ENCODE measurements at regions of chr3 and their contacts with region 1.

Region 1: GRCh38 chr3:52891615-52892081 is 5.7 kb downstream of the STIMATE start:
- DNase-seq: no peak
- H3K4me3 Mint-ChIP-seq: no peak overlapping the region
- H3K27ac Mint-ChIP-seq: peak overlapping the region; percentile 73
- H3K4me1 Mint-ChIP-seq: peaks cover 68% of the 10 kb centered on the region
- H3K27me3 Mint-ChIP-seq: no peaks in the 10 kb centered on the region

Region 2: GRCh38 chr3:52346623-52347530 is 544.8 kb before region 1 on chr3:
- CTCF ChIA-PET with region 1: no interaction called
- POLR2A ChIA-PET with region 1: no interaction called
- intact Hi-C with region 1: no loop called
- DNase-seq: no peak
- H3K4me3 Mint-ChIP-seq: no peak overlapping the region
- H3K27ac Mint-ChIP-seq: no peak overlapping the region
- H3K4me1 Mint-ChIP-seq: no peaks in the 10 kb centered on the region
- H3K27me3 Mint-ChIP-seq: no peaks in the 10 kb centered on the region

Region 3: GRCh38 chr3:52851348-52851747 is 40.3 kb before region 1 on chr3:
- CTCF ChIA-PET with region 1: interaction called, 4 read pairs
- POLR2A ChIA-PET with region 1: no interaction called
- intact Hi-C with region 1: loop called (anchors 2 kb)
- DNase-seq: peak; percentile 51
- H3K4me3 Mint-ChIP-seq: no peak overlapping the region
- H3K27ac Mint-ChIP-seq: no peak overlapping the region
- H3K4me1 Mint-ChIP-seq: no peaks in the 10 kb centered on the region
- H3K27me3 Mint-ChIP-seq: no peaks in the 10 kb centered on the region

Region 4: DNA sequence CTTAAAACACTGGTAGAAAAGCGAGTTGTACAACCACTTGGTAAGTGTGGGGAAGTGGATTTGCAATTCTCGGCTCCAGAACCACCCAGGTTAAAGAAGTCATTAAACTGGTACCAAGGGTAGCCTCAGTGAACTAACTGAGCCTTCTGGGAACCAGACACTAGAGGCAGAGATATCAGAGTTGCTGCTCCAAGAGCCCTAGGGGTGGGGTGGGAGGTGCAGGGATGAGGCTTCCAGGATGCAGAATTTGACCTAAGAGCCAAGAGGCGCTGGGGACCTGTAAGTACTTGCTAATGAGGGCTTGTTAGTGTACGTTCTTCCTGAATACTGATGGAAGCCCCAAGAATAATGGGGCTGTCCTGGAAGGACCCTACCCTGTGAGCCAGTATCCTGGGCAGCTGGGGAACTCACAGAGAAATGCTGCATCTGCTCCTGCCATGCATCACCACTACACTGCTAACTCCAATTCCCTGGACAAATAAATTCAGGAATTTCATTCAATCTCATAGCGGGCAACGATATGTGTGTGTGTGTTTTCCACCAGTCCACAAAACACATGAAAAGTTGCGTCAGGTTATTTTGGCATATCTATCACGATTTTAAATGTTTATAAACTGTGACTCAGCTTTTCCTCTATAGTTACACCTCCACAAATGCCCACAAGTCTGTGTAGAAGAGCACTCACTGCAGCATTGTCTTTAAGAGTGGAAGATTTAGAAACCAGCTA is 18.1 kb before region 1 on chr3:
- CTCF ChIA-PET with region 1: interaction called, 46 read pairs
- POLR2A ChIA-PET with region 1: no interaction called
- intact Hi-C with region 1: loop called (anchors 1 kb)
- DNase-seq: no peak
- H3K4me3 Mint-ChIP-seq: no peak overlapping the region
- H3K27ac Mint-ChIP-seq: peak overlapping the region; percentile 18
- H3K4me1 Mint-ChIP-seq: peaks cover 31% of the 10 kb centered on the region
- H3K27me3 Mint-ChIP-seq: no peaks in the 10 kb centered on the region

Region 5: DNA sequence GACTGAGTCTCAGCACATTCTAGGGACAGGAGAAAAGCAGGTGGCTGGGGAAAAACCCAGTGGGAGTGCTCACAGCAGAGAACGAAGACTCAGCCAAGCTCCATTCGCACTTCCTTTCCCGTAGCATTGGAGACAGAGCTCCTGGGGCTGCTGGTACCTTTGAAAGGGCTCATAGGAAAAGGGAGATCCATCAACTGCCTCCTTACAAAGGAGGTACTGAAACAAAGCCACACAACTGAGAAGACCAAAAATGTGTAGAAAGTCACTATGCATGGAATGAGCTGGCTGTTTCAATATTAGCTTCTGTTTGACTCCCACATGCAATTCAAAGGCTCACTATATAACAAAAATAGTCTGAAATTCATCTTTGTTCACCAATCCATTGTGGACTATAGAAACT is 11.2 kb before region 1 on chr3:
- CTCF ChIA-PET with region 1: interaction called, 46 read pairs
- POLR2A ChIA-PET with region 1: interaction called, 4 read pairs
- intact Hi-C with region 1: loop called (anchors 1 kb)
- DNase-seq: peak; percentile 31
- H3K4me3 Mint-ChIP-seq: no peak overlapping the region
- H3K27ac Mint-ChIP-seq: no peak overlapping the region
- H3K4me1 Mint-ChIP-seq: peaks cover 18% of the 10 kb centered on the region
- H3K27me3 Mint-ChIP-seq: no peaks in the 10 kb centered on the region

Measured in activated CD4-positive, alpha-beta memory T cell treated with anti-CD3 and anti-CD28 coated beads for 36 hours (primary cell).